Activated CD4-positive, alpha-beta memory T cell treated with anti-CD3 and anti-CD28 coated beads, Interleukin-2, amount 10 ng/mL, durations not matched to agents 7 days and 5 days (primary cell): ENCODE measurements at regions of chr15 and their contacts with region 1.

Region 1: DNA sequence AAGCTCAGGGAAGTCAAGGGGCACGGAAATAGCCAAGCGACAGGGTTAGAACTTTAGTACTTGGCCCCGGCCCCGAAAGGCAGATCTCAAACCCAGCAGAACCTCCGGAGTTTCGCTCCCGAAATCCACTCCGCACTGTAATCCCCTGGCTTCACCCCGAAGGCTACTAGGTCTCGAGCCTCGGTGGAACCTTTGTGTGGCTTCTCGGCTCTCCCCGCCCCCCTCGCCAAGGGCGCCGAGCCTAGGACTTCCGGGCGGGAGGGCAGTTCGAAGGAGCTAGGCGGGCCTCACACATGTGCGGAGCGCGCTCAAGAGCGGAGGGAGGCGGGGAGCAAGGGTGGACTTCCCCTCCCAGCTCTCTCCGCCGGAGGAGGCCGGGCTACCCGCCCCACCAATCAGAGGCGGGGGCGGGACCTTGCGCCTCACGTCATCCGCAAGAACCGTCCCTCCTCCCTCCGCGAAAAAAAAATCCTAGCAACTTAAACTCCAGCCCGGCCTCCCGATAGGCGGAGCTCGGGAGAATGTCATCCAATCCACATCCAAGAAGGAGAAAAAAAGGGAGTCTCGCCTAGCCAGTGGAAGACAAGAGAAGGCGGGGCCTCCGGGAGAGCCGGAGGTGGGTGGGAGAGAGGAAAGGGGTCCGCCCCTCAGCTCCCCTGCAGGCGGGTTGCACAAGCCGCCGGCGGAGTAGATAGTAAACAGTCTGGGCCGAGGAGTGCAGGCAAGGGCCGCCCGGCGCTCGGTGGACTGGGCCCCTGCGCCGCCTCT is 2.4 kb upstream of the SIN3A start:
- DNase-seq: peak; percentile 98
- H3K4me3 Mint-ChIP-seq: peak overlapping the region; percentile 92
- H3K27ac Mint-ChIP-seq: peak overlapping the region; percentile 99
- H3K4me1 Mint-ChIP-seq: peaks cover 27% of the 10 kb centered on the region
- H3K27me3 Mint-ChIP-seq: no peaks in the 10 kb centered on the region

Region 2: GRCh38 chr15:74642729-74643367 is 811.0 kb before region 1 on chr15:
- CTCF ChIA-PET with region 1: no interaction called
- POLR2A ChIA-PET with region 1: no interaction called
- DNase-seq: no peak
- H3K4me3 Mint-ChIP-seq: no peak overlapping the region
- H3K27ac Mint-ChIP-seq: no peak overlapping the region
- H3K4me1 Mint-ChIP-seq: peaks cover 8% of the 10 kb centered on the region
- H3K27me3 Mint-ChIP-seq: no peaks in the 10 kb centered on the region

Region 3: GRCh38 chr15:75104804-75105535 is 348.9 kb before region 1 on chr15:
- CTCF ChIA-PET with region 1: no interaction called
- POLR2A ChIA-PET with region 1: no interaction called
- DNase-seq: peak; percentile 64
- H3K4me3 Mint-ChIP-seq: peak overlapping the region; percentile 5
- H3K27ac Mint-ChIP-seq: peak overlapping the region; percentile 75
- H3K4me1 Mint-ChIP-seq: peaks cover 42% of the 10 kb centered on the region
- H3K27me3 Mint-ChIP-seq: peaks cover 13% of the 10 kb centered on the region

Region 4: GRCh38 chr15:75335705-75336355 is 118.1 kb before region 1 on chr15 and contains the start of gene COMMD4:
- CTCF ChIA-PET with region 1: no interaction called
- POLR2A ChIA-PET with region 1: no interaction called
- DNase-seq: peak; percentile 88
- H3K4me3 Mint-ChIP-seq: peak within 1 kb of the TSS; percentile 93
- H3K27ac Mint-ChIP-seq: peak within 1 kb of the TSS; percentile 80
- H3K4me1 Mint-ChIP-seq: peaks cover 26% of the 10 kb centered on the region
- H3K27me3 Mint-ChIP-seq: peaks cover 3% of the 10 kb centered on the region
- total RNA-seq, gene COMMD4: 87.8 to 91.0 TPM

Region 5: GRCh38 chr15:75347222-75347878 is 106.5 kb before region 1 on chr15:
- CTCF ChIA-PET with region 1: no interaction called
- POLR2A ChIA-PET with region 1: interaction called, 11 read pairs
- DNase-seq: peak; percentile 29
- H3K4me3 Mint-ChIP-seq: peak overlapping the region; percentile 60
- H3K27ac Mint-ChIP-seq: no peak overlapping the region
- H3K4me1 Mint-ChIP-seq: peaks cover 39% of the 10 kb centered on the region
- H3K27me3 Mint-ChIP-seq: peaks cover 25% of the 10 kb centered on the region

Region 6: DNA sequence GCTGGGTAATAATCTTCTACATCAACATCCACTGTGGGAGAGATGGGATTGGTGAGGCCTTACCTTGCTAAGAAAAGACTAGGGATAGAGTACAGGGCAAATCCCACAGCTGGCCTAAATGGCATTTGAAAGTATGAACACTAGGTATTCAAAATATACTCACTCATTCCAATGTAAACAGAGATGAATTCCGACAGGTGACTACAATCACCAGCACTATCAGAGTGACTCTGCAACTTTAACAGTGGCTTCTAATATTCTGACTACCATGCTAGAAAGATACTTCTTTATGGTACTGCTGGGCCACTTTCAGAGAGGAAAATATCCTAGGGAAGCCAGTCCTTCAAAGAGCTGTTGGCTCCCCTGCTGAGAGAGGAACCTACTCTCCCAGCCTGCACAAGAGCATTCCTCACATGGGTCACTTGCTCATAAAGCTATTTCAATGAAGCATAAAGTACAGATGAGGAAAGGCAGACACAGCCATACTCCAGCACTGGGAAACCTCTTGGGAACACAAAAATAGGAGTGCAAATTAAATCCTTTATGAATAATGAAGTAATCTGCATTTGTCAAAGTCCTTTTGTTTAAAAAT is 64.0 kb before region 1 on chr15:
- CTCF ChIA-PET with region 1: no interaction called
- POLR2A ChIA-PET with region 1: interaction called, 11 read pairs
- DNase-seq: no peak
- H3K4me3 Mint-ChIP-seq: no peak overlapping the region
- H3K27ac Mint-ChIP-seq: no peak overlapping the region
- H3K4me1 Mint-ChIP-seq: peaks cover 14% of the 10 kb centered on the region
- H3K27me3 Mint-ChIP-seq: no peaks in the 10 kb centered on the region

Region 7: DNA sequence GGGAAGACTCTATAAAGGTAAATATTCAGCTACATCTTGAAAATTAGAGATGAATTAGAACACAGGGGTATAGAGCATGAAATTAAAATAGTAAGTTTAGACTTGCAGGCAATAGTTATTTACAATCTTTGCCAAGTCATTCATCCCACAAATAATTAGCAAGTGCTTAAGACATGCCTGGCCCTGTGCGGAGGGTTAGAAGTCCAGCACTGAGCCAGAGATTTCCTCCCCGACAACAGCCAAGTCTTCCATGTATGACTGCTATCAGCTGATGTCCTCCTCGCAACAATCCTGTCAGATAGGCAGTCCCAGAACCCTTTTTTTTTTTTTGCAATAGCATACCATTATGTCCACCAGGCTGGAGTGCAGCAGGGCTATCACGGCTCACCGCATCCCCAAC is 17.0 kb before region 1 on chr15:
- CTCF ChIA-PET with region 1: interaction called, 3 read pairs
- POLR2A ChIA-PET with region 1: interaction called, 55 read pairs
- DNase-seq: no peak
- H3K4me3 Mint-ChIP-seq: no peak overlapping the region
- H3K27ac Mint-ChIP-seq: no peak overlapping the region
- H3K4me1 Mint-ChIP-seq: peaks cover 30% of the 10 kb centered on the region
- H3K27me3 Mint-ChIP-seq: no peaks in the 10 kb centered on the region

Region 8: DNA sequence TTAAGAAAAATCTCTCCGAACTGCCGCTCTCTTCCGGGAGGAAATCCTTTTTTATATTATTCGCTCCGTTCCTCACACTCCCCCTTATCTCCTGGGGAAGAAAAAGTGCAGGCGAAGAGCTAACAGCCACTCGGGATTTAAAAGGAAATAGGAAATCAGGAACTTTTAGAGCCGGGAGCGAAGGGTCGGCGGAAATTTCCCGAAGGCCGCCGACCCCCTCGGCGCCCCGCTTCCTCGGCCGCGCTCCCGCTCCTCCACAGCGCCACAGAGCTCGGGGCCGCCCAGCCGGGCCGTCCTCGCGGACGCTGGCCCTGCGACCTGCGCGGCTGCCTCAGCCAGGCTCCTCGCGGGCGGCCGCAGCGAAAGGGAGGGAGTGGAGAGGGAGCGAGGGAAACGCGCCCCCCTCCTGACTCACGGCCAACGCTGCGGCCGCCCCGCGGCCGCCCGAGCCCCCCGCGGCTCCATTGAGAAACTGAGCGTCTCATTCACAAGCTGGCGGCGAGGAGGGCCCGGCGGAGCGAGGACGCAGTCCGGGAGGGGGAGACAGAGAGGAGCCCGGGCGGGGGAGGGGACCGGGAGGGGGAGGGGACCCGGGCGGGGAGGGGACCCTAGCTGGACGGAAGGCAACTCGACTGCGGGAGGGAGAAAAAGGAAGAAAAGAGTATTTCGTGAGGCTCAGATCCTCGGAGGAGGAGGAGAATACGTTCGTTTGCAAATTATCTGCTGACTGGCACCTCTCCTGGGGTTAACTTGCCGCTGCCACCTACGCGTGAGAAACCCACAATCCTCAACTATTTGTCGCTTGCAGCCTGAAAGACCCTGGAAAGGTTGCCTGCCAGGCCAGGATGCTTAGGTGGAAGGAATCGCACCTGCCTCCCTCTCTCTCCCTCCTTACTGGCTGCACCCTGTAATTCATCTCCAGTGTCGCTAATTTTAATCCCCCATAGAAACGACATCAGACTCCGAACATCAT is 125.3 kb after region 1 on chr15 and contains the start of gene PTPN9:
- CTCF ChIA-PET with region 1: interaction called, 13 read pairs
- POLR2A ChIA-PET with region 1: interaction called, 78 read pairs
- DNase-seq: peak; percentile 81
- H3K4me3 Mint-ChIP-seq: peak within 1 kb of the TSS; percentile 86
- H3K27ac Mint-ChIP-seq: peak within 1 kb of the TSS; percentile 93
- H3K4me1 Mint-ChIP-seq: peaks cover 24% of the 10 kb centered on the region
- H3K27me3 Mint-ChIP-seq: no peaks in the 10 kb centered on the region
- total RNA-seq, gene PTPN9: 41.4 to 41.6 TPM

Region 9: GRCh38 chr15:75606711-75607699 is 153.1 kb after region 1 on chr15:
- CTCF ChIA-PET with region 1: interaction called, 4 read pairs
- POLR2A ChIA-PET with region 1: interaction called, 37 read pairs
- DNase-seq: peak; percentile 70
- H3K4me3 Mint-ChIP-seq: peak overlapping the region; percentile 60
- H3K27ac Mint-ChIP-seq: peak overlapping the region; percentile 98
- H3K4me1 Mint-ChIP-seq: peaks cover 52% of the 10 kb centered on the region
- H3K27me3 Mint-ChIP-seq: no peaks in the 10 kb centered on the region

Region 10: GRCh38 chr15:75639709-75640482 is 186.0 kb after region 1 on chr15 and contains the start of gene IMP3:
- CTCF ChIA-PET with region 1: interaction called, 22 read pairs
- POLR2A ChIA-PET with region 1: interaction called, 188 read pairs
- DNase-seq: peak; percentile 96
- H3K4me3 Mint-ChIP-seq: peak within 1 kb of the TSS; percentile 86
- H3K27ac Mint-ChIP-seq: peak within 1 kb of the TSS; percentile 94
- H3K4me1 Mint-ChIP-seq: peaks cover 43% of the 10 kb centered on the region
- H3K27me3 Mint-ChIP-seq: no peaks in the 10 kb centered on the region
- total RNA-seq, gene IMP3: 72.3 to 75.5 TPM